ENCODE measurements at regions of chr16 and their contacts with region 1.

Region 1: GRCh38 chr16:8674413-8675022 is at the start of gene ABAT:
- DNase-seq: peak; percentile 85
- H3K4me3 Mint-ChIP-seq: peak within 1 kb of the TSS; percentile 79
- H3K27ac Mint-ChIP-seq: peak within 1 kb of the TSS; percentile 57
- H3K4me1 Mint-ChIP-seq: peaks cover 17% of the 10 kb centered on the region
- H3K27me3 Mint-ChIP-seq: no peaks in the 10 kb centered on the region
- total RNA-seq, gene ABAT: 2.7 to 3.1 TPM

Region 2: DNA sequence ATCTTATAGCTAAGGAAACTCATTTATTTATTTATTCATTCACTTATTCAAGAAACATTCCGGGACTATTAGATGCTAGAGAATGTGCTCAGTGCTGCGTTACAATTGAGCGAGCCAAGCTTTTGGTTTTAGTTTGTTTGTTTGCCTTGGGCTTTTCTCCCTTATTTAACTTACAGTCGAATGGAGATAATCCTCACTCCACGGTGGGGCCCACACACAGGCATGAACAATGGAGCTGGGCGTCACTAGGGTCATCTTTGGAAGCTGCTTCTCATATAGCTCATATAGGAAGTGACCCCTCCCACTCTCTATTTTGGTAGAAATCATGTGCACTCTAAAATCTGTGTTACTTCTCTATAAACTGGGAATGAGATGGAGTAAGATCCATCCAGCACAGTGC is 294.2 kb before region 1 on chr16:
- CTCF ChIA-PET with region 1: no interaction called
- intact Hi-C with region 1: no loop called
- DNase-seq: no peak
- H3K4me3 Mint-ChIP-seq: no peak overlapping the region
- H3K27ac Mint-ChIP-seq: no peak overlapping the region
- H3K4me1 Mint-ChIP-seq: no peaks in the 10 kb centered on the region
- H3K27me3 Mint-ChIP-seq: no peaks in the 10 kb centered on the region

Region 3: DNA sequence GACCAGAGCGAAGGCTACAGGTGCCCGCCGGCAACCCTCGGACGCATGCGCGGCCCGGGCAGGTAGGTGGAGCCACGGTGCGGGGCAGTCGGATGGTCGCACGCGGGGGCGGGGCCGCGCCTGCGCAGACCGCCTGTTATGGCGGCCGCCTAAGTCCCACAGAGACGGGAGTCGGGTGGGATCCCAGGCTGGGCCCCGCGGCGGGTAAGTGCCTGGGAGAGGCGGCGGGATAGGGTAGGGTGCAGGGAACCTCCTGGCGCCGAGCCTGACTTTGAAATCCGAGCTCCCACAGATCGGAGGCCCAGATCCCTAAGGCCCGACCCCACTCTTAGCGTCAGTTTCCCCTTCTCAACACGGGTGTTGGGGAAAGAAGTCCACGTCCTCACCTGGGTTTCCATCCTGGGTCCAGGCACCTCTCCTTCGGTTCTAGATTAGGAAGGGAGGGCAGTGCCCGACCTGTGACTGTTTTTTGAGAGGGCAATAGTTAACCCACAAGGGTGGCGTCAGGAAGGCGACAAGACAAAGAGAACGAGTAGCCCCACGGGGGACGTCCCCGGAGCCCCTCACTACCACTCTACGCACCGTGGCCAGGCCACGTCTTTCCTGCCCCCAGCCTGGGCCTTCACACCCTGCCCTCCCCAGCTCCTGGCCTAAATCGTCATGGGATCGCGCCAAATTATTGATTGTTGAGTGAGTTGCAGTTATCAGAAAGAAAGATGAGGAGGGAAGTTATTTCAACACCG is 52.8 kb before region 1 on chr16 and contains the start of gene METTL22:
- CTCF ChIA-PET with region 1: no interaction called
- intact Hi-C with region 1: loop called (anchors 2 kb)
- DNase-seq: peak; percentile 92
- H3K4me3 Mint-ChIP-seq: peak within 1 kb of the TSS; percentile 97
- H3K27ac Mint-ChIP-seq: peak within 1 kb of the TSS; percentile 70
- H3K4me1 Mint-ChIP-seq: peaks cover 27% of the 10 kb centered on the region
- H3K27me3 Mint-ChIP-seq: no peaks in the 10 kb centered on the region
- total RNA-seq, gene METTL22: 43.2 to 48.4 TPM

Region 4: DNA sequence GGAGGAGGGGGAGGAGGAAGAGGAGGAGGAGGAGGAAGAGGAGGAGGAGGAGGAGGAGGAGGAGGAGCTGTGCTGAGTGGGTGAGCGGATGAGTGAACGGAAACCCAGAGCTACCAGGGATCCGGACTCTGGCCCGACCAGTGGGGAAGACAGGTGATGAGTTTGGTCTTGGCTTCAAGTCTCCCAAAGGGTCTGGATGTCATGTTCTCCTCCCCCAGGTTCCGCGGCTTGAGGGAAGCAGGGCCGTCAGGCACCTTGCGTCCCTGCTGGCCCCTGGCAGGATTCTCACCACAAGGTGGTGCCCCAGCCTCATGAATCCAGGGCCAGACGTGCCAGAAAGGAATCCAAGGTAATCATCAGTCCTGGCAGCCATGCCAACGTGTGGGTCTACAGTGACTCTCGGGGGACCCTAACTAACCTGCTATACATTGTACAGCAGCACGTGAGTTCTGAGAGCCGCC is 13.6 kb before region 1 on chr16:
- CTCF ChIA-PET with region 1: interaction called, 11 read pairs
- intact Hi-C with region 1: no loop called
- DNase-seq: peak; percentile 70
- H3K4me3 Mint-ChIP-seq: no peak overlapping the region
- H3K27ac Mint-ChIP-seq: no peak overlapping the region
- H3K4me1 Mint-ChIP-seq: no peaks in the 10 kb centered on the region
- H3K27me3 Mint-ChIP-seq: no peaks in the 10 kb centered on the region

Region 5: GRCh38 chr16:8760021-8760420 is 85.5 kb after region 1 on chr16:
- CTCF ChIA-PET with region 1: no interaction called
- intact Hi-C with region 1: no loop called
- DNase-seq: no peak
- H3K4me3 Mint-ChIP-seq: no peak overlapping the region
- H3K27ac Mint-ChIP-seq: no peak overlapping the region
- H3K4me1 Mint-ChIP-seq: no peaks in the 10 kb centered on the region
- H3K27me3 Mint-ChIP-seq: no peaks in the 10 kb centered on the region

Region 6: DNA sequence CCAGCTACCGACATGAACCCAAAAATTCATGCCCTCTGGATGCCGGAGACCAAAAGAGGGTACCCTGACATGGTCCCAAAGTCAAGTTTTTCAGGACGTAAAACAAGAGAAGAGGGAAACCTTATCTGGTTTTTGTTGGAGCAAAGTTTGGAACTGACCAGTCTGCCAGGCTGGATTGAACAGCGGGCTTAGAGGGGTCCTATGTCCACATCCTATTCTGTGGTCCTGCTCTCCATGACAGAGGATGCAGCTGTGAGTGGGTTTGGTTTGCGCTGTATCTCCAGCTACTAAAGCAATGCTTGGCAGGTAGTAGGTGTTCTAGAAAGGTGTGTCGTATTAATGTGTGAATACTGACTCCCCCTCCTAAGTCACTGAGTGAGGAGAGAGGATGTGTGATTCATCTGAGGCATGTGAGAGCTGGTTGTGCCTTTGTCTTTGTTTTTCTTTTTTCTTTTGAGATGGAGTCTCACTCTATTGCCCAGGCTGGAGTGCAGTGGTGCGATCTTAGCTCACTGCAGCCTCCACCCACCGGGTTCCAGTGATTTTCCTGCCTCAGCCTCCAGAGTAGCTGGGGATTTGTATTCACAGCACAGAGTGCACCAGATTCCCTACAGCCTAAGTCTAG is 154.1 kb after region 1 on chr16:
- CTCF ChIA-PET with region 1: no interaction called
- intact Hi-C with region 1: no loop called
- DNase-seq: no peak
- H3K4me3 Mint-ChIP-seq: no peak overlapping the region
- H3K27ac Mint-ChIP-seq: no peak overlapping the region
- H3K4me1 Mint-ChIP-seq: peaks cover 17% of the 10 kb centered on the region
- H3K27me3 Mint-ChIP-seq: no peaks in the 10 kb centered on the region

Region 7: DNA sequence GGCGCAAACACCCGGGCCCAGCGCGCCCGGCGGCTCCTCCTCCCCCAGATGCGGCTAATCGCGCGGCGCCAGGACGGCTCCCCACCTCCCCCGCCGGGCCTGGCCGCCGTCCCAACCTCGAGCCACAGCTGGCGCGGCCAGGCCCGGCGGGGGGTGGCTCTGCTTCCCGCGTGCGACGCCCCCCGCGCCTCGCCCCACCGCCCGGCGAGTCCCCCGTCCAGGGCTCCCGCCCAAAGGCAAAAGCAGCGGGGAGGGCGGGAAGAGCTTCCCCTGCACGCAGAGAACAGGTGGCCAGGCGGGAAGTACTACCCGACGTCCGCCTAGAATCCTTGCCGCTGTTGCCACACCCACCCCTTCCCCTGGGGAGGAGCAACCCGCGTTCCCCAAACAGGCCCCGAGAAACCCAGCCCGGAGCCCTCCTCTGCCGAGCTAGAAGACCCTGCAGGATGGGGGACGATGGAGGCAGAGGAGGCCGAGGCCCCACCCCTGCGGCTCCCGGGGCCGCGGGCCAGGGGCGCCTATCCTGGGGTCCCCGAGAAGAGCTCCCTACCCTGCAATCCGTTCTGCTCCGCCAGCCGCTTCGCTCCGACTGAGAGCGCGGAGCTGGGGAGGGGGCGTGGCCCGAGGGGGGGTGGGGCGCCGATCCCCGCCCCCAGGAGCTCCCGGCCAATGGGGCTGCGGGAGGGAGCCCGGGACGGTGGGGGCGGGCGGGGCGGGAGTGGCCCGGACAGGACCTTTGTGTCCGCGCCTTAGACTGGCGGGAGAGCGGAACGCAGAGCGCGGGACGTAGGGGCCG is 194.1 kb after region 1 on chr16 and contains the start of gene CARHSP1:
- CTCF ChIA-PET with region 1: no interaction called
- intact Hi-C with region 1: loop called (anchors 2 kb)
- DNase-seq: peak; percentile 81
- H3K4me3 Mint-ChIP-seq: peak within 1 kb of the TSS; percentile 89
- H3K27ac Mint-ChIP-seq: peak within 1 kb of the TSS; percentile 83
- H3K4me1 Mint-ChIP-seq: peaks cover 36% of the 10 kb centered on the region
- H3K27me3 Mint-ChIP-seq: no peaks in the 10 kb centered on the region
- total RNA-seq, gene CARHSP1: 46.5 to 49.6 TPM

Region 8: GRCh38 chr16:9061358-9061813 is 386.9 kb after region 1 on chr16:
- CTCF ChIA-PET with region 1: no interaction called
- intact Hi-C with region 1: no loop called
- DNase-seq: no peak
- H3K4me3 Mint-ChIP-seq: no peak overlapping the region
- H3K27ac Mint-ChIP-seq: no peak overlapping the region
- H3K4me1 Mint-ChIP-seq: peaks cover 16% of the 10 kb centered on the region
- H3K27me3 Mint-ChIP-seq: no peaks in the 10 kb centered on the region

Region 9: GRCh38 chr16:9124908-9125584 is 450.5 kb after region 1 on chr16:
- CTCF ChIA-PET with region 1: no interaction called
- intact Hi-C with region 1: loop called (anchors 2 kb)
- DNase-seq: no peak
- H3K4me3 Mint-ChIP-seq: no peak overlapping the region
- H3K27ac Mint-ChIP-seq: peak overlapping the region; percentile 64
- H3K4me1 Mint-ChIP-seq: peaks cover 61% of the 10 kb centered on the region
- H3K27me3 Mint-ChIP-seq: no peaks in the 10 kb centered on the region

Measured in activated naive CD4-positive, alpha-beta T cell treated with anti-CD3 and anti-CD28 coated beads for 36 hours (primary cell).